Activated CD4-positive, alpha-beta memory T cell treated with anti-CD3 and anti-CD28 coated beads for 36 hours (primary cell): ENCODE measurements at regions of chr4 and their contacts with region 1.

Region 1: GRCh38 chr4:139030614-139031235 is 15.1 kb downstream of the NOCT start:
- DNase-seq: peak; percentile 78
- H3K4me3 Mint-ChIP-seq: no peak overlapping the region
- H3K27ac Mint-ChIP-seq: no peak overlapping the region
- H3K4me1 Mint-ChIP-seq: peaks cover 10% of the 10 kb centered on the region
- H3K27me3 Mint-ChIP-seq: no peaks in the 10 kb centered on the region

Region 2: GRCh38 chr4:138439143-138439581 is 591.6 kb before region 1 on chr4:
- CTCF ChIA-PET with region 1: no interaction called
- POLR2A ChIA-PET with region 1: no interaction called
- intact Hi-C with region 1: no loop called
- DNase-seq: no peak
- H3K4me3 Mint-ChIP-seq: no peak overlapping the region
- H3K27ac Mint-ChIP-seq: no peak overlapping the region
- H3K4me1 Mint-ChIP-seq: no peaks in the 10 kb centered on the region
- H3K27me3 Mint-ChIP-seq: no peaks in the 10 kb centered on the region

Region 3: GRCh38 chr4:139015269-139015947 is 15.3 kb before region 1 on chr4 and contains the start of gene NOCT:
- CTCF ChIA-PET with region 1: interaction called, 63 read pairs
- POLR2A ChIA-PET with region 1: interaction called, 6 read pairs
- intact Hi-C with region 1: no loop called
- DNase-seq: peak; percentile 97
- H3K4me3 Mint-ChIP-seq: peak within 1 kb of the TSS; percentile 89
- H3K27ac Mint-ChIP-seq: peak within 1 kb of the TSS; percentile 94
- H3K4me1 Mint-ChIP-seq: peaks cover 45% of the 10 kb centered on the region
- H3K27me3 Mint-ChIP-seq: no peaks in the 10 kb centered on the region
- total RNA-seq, gene NOCT: 12.2 to 14.3 TPM

Region 4: DNA sequence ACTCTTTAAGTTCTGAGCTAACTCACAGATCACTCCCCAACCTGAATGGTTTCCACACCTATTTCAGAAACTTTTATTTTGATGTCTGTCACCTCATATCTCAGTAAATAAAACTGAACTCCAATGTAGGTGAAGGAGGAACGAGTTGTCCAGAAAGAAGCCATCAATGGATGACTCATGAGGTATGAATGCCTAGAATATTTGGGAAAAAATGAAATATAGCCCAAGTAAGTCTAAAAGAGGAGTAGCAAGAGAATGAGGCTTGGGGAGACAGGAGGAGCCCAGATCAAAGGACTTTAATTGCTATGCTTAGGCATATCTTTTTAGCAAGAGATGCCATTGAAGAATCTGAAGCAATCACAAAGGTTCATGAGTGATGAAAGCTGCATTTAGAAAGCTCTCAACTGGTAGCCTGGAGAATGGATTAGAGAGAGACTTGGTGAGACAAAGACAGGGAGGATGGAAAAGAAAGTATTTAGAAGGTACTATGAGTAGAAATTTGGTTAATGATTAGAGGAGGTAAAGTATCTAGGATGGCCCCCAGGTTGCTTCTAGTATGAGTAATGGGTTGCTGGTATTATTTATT is 24.2 kb after region 1 on chr4:
- CTCF ChIA-PET with region 1: interaction called, 18 read pairs
- POLR2A ChIA-PET with region 1: no interaction called
- intact Hi-C with region 1: no loop called
- DNase-seq: no peak
- H3K4me3 Mint-ChIP-seq: no peak overlapping the region
- H3K27ac Mint-ChIP-seq: no peak overlapping the region
- H3K4me1 Mint-ChIP-seq: peaks cover 22% of the 10 kb centered on the region
- H3K27me3 Mint-ChIP-seq: no peaks in the 10 kb centered on the region

Region 5: GRCh38 chr4:139099366-139099982 is 68.7 kb after region 1 on chr4:
- CTCF ChIA-PET with region 1: interaction called, 29 read pairs
- POLR2A ChIA-PET with region 1: no interaction called
- intact Hi-C with region 1: loop called (anchors 1 kb)
- DNase-seq: peak; percentile 80
- H3K4me3 Mint-ChIP-seq: no peak overlapping the region
- H3K27ac Mint-ChIP-seq: no peak overlapping the region
- H3K4me1 Mint-ChIP-seq: no peaks in the 10 kb centered on the region
- H3K27me3 Mint-ChIP-seq: no peaks in the 10 kb centered on the region

Region 6: DNA sequence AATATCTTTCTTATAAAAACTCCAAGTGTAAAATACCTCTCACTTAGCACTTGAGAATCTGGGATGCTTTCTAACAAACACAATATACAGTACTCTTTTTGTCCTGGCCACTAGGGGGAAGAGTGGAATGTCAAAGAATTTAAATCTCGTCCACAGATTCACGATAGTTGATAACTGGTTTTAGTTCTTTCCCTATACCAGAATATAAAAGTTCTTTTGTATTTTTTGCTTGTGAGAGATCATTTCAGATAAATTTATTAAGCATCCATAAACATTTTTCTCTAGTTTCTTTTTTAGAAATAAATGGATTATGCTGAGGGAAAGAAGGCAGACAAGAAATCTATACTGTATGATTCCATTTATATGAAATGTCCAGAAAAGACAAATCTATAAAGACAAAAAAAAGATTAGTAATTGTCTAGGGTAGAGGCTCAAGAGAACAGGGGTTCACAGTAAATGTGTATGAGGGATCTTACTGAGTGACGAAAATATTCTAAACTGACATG is 198.9 kb after region 1 on chr4:
- CTCF ChIA-PET with region 1: interaction called, 4 read pairs
- POLR2A ChIA-PET with region 1: no interaction called
- intact Hi-C with region 1: loop called (anchors 2 kb)
- DNase-seq: no peak
- H3K4me3 Mint-ChIP-seq: no peak overlapping the region
- H3K27ac Mint-ChIP-seq: no peak overlapping the region
- H3K4me1 Mint-ChIP-seq: no peaks in the 10 kb centered on the region
- H3K27me3 Mint-ChIP-seq: no peaks in the 10 kb centered on the region

Region 7: DNA sequence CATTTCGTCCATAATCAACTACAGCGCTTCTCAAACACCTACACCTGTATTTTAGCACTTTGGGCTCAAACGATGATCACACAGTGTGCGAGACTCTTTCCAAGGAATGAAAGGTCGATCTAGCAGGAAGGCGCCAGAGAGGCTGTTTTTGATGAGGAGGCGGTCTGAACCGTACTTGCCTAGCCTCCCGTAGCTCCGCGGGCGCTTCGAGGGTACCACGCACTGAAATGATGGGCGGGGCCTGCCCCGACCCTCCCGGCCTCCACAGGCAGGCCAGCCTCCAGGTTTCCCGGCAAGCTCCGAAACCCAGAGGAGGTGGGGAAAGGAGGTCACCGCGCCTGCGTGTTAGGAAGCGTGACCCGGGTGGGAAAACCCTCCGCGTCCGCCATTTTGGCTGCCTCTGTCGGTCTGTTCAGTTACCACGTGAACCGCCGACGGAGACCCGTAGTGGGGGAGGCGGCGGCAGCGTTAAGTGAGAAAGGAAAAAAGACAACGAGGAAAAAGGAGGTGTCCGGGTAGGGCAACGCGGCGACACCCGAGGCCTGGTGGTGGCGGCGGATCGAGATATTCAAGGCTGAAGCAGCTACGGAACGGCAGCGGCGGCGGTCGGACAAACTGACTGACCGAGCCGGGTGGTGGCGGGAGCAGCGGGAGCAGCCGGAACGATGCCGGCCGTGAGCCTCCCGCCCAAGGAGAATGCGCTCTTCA is 270.5 kb after region 1 on chr4 and contains the start of gene NAA15:
- CTCF ChIA-PET with region 1: interaction called, 24 read pairs
- POLR2A ChIA-PET with region 1: interaction called, 3 read pairs
- intact Hi-C with region 1: no loop called
- DNase-seq: peak; percentile 99
- H3K4me3 Mint-ChIP-seq: peak within 1 kb of the TSS; percentile 100
- H3K27ac Mint-ChIP-seq: peak within 1 kb of the TSS; percentile 100
- H3K4me1 Mint-ChIP-seq: peaks cover 51% of the 10 kb centered on the region
- H3K27me3 Mint-ChIP-seq: no peaks in the 10 kb centered on the region
- total RNA-seq, gene NAA15: 91.2 to 95.8 TPM